ENCODE measurements at regions of chr19 and their contacts with region 1.

Region 1: GRCh38 chr19:16470911-16471811 is 609 bp downstream of the EPS15L1 start:
- DNase-seq: peak; percentile 60
- ATAC-seq: peak; percentile 20
- H3K4me3 Mint-ChIP-seq: peak overlapping the region; percentile 85
- H3K27ac Mint-ChIP-seq: peak overlapping the region; percentile 72
- H3K4me1 Mint-ChIP-seq: peaks cover 37% of the 10 kb centered on the region
- H3K27me3 Mint-ChIP-seq: peaks cover 2% of the 10 kb centered on the region

Region 2: DNA sequence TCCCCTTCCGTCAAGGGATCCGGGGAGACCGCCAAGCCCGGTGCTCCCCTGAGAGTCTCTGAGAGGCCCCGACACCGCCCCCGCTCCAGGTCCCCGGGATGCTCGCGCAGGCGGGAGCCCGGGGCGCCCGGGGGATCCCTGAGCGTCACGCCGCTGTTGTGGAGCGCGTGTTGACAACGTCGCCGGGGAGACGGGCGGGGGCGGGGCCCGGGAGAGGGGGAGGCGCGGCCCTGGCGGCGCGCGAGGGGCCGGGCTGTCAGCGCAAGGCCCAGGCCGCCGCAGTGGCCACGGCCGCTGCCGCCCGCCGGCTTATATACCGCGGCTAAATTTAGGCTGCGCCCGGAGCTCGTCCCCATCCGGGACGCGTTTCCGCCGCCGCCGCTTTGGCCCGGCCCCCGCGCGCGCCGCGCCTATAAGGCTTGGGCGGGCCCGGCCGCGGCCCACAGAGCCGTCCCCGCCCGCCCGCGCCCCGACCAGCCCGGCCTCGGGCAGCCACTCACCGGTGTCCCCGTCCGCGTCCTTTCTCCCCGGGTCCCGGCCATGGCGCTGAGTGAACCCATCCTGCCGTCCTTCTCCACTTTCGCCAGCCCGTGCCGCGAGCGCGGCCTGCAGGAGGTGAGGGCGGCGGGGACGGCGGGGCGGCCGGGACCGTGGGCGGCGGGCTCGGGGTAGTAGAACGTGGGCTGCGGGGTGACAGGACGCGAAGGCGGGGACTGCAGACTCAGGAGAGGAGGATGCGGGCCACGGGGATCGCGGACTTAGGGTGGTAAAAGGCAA is 146.6 kb before region 1 on chr19 and contains the start of gene KLF2:
- CTCF ChIA-PET with region 1: no interaction called
- POLR2A ChIA-PET with region 1: no interaction called
- intact Hi-C with region 1: no loop called
- DNase-seq: peak; percentile 89
- ATAC-seq: peak; percentile 63
- H3K4me3 Mint-ChIP-seq: peak within 1 kb of the TSS; percentile 58
- H3K27ac Mint-ChIP-seq: no peak within 1 kb of the TSS
- H3K4me1 Mint-ChIP-seq: peaks cover 38% of the 10 kb centered on the region
- H3K27me3 Mint-ChIP-seq: peaks cover 29% of the 10 kb centered on the region
- total RNA-seq, gene KLF2: 0.57 to 0.90 TPM

Region 3: DNA sequence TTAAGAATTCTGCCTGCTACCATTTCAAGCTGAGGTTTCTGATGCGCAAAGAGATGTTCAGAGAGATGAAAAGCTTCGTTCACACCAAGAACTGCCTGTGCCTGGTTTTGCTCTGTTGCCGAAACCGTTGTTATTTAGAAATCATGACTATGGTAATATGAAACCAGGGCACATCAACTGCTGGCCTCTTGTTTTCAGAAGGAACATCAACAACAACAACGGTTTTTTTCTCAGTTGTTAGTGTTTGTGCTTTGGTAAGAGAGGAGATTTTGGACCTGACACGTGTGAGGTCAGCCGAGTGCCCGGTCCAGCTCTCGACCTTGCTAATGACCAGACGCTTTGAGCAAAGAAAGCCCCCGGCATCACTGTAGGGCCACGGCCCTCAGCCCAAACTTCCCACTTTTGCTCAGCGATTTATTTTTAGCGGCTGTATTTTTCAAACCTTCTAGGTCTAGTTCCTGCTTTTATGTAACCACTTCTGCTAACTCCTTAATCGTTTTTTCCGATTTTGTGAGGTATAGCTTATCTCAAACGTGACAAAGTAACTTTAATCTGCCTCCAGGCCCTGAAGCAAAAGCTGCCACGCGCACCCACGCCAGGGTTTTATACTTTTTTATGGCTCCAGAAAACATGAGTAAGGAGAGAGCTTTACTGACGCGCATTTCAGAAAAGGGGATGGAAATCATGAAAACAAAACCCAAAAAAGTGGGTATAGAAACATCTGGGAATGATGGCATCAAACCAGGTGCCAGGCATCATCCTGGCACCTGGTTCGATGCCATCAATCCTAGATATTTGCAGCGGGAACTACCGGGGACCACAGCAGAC is 104.5 kb before region 1 on chr19:
- CTCF ChIA-PET with region 1: no interaction called
- POLR2A ChIA-PET with region 1: no interaction called
- intact Hi-C with region 1: no loop called
- DNase-seq: peak; percentile 50
- ATAC-seq: no peak
- H3K4me3 Mint-ChIP-seq: peak overlapping the region; percentile 56
- H3K27ac Mint-ChIP-seq: peak overlapping the region; percentile 61
- H3K4me1 Mint-ChIP-seq: peaks cover 51% of the 10 kb centered on the region
- H3K27me3 Mint-ChIP-seq: peaks cover 21% of the 10 kb centered on the region

Region 4: DNA sequence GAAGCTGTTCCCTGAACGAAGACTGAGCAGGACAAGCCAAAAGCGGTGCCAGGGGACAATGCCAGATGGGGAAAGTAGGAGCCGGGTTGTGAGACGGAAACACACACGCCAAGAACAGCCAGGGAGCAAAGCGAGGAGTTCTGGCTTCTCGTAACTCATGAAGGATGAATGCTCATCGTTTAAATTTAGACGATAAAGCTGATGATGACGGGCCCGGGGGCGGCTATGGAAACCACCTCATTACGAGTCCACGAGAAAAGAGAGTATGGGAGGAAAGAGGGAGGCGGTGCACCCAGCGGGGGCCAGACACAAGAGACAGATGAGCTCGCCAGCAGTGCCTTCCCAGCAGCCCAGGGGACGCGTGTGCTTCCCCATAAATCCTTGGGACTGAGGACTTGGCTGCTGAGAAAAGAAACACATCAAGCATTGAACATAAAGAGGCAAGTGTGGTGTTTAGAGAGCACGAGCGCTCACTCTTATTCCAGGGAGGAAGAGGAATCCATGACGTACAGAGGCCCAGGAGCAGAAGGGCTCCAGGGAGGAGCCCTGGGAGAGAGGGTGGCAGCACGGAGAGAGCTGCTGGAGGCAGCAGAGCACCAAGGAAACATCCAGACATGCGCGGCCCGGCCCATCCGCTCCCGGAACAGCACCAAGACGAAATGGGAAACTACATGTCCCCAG is 70.1 kb before region 1 on chr19:
- CTCF ChIA-PET with region 1: no interaction called
- POLR2A ChIA-PET with region 1: no interaction called
- intact Hi-C with region 1: no loop called
- DNase-seq: peak; percentile 53
- ATAC-seq: no peak
- H3K4me3 Mint-ChIP-seq: no peak overlapping the region
- H3K27ac Mint-ChIP-seq: peak overlapping the region; percentile 64
- H3K4me1 Mint-ChIP-seq: peaks cover 14% of the 10 kb centered on the region
- H3K27me3 Mint-ChIP-seq: no peaks in the 10 kb centered on the region

Region 5: DNA sequence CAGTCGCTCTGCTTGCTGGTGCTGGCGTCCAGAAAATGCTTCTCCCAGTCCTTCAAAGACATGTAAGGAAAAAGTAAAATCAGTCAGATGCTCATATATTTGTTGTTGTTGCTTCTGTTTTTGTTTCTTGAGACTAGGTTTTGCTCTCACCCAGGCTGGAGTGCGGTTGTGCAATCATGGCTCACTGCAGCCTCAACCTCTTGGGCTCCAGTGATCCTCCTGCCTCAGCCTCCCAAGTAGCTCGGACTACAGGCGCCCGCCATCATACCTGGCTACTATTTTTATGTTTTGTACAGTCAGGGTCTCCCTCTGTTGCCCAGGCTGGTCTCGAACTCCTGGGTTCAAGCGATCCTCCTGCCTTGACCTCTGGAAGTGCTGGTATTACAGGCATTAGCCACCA is 11.6 kb after region 1 on chr19:
- CTCF ChIA-PET with region 1: no interaction called
- POLR2A ChIA-PET with region 1: no interaction called
- intact Hi-C with region 1: no loop called
- DNase-seq: no peak
- ATAC-seq: no peak
- H3K4me3 Mint-ChIP-seq: no peak overlapping the region
- H3K27ac Mint-ChIP-seq: no peak overlapping the region
- H3K4me1 Mint-ChIP-seq: no peaks in the 10 kb centered on the region
- H3K27me3 Mint-ChIP-seq: no peaks in the 10 kb centered on the region

Region 6: GRCh38 chr19:17226002-17226933 is 755.1 kb after region 1 on chr19 and contains the start of gene OCEL1:
- CTCF ChIA-PET with region 1: no interaction called
- POLR2A ChIA-PET with region 1: no interaction called
- intact Hi-C with region 1: loop called in 1 of 2 experiments (anchors 5 kb)
- DNase-seq: peak; percentile 99
- ATAC-seq: peak; percentile 92
- H3K4me3 Mint-ChIP-seq: peak within 1 kb of the TSS; percentile 80
- H3K27ac Mint-ChIP-seq: peak within 1 kb of the TSS; percentile 93
- H3K4me1 Mint-ChIP-seq: peaks cover 7% of the 10 kb centered on the region
- H3K27me3 Mint-ChIP-seq: no peaks in the 10 kb centered on the region
- total RNA-seq, gene OCEL1: 10.9 to 11.7 TPM